WTC11 (cell line): ENCODE measurements at regions of chr21 and their contacts with region 1.

Region 1: GRCh38 chr21:44510508-44511210 is 29.3 kb downstream of the KRTAP10-1 start:
- DNase-seq: peak; percentile 82
- ATAC-seq: peak; percentile 86
- H3K4me3 Mint-ChIP-seq: no peak overlapping the region
- H3K27ac Mint-ChIP-seq: no peak overlapping the region
- H3K4me1 Mint-ChIP-seq: no peaks in the 10 kb centered on the region; the same call in 1 of the 2 replicates
- H3K27me3 Mint-ChIP-seq: no peaks in the 10 kb centered on the region
- CTCF ChIP-seq: peak; percentile 90

Region 2: GRCh38 chr21:44089001-44089911 is 421.4 kb before region 1 on chr21:
- CTCF ChIA-PET with region 1: no interaction called
- POLR2A ChIA-PET with region 1: no interaction called
- DNase-seq: no peak
- ATAC-seq: no peak
- H3K4me3 Mint-ChIP-seq: no peak overlapping the region
- H3K27ac Mint-ChIP-seq: no peak overlapping the region
- H3K4me1 Mint-ChIP-seq: no peaks in the 10 kb centered on the region
- H3K27me3 Mint-ChIP-seq: no peaks in the 10 kb centered on the region
- CTCF ChIP-seq: no peak

Region 3: GRCh38 chr21:44522456-44523204 is 12.0 kb after region 1 on chr21:
- CTCF ChIA-PET with region 1: interaction called, 21 read pairs
- POLR2A ChIA-PET with region 1: no interaction called
- DNase-seq: peak; percentile 18
- ATAC-seq: peak; percentile 24; the same call in 1 of the 2 replicates
- H3K4me3 Mint-ChIP-seq: no peak overlapping the region
- H3K27ac Mint-ChIP-seq: no peak overlapping the region
- H3K4me1 Mint-ChIP-seq: 0 out of 2 replicates have a peak, but pooled peaks cover 2% of the 10 kb centered on the region
- H3K27me3 Mint-ChIP-seq: no peaks in the 10 kb centered on the region; the same call in 1 of the 2 replicates
- CTCF ChIP-seq: no peak

Region 4: GRCh38 chr21:44697811-44698734 is 187.4 kb after region 1 on chr21:
- CTCF ChIA-PET with region 1: interaction called, 10 read pairs
- POLR2A ChIA-PET with region 1: no interaction called
- DNase-seq: no peak
- ATAC-seq: peak; percentile 66
- H3K4me3 Mint-ChIP-seq: no peak overlapping the region
- H3K27ac Mint-ChIP-seq: peak overlapping the region; percentile 27; the same call in 1 of the 2 replicates
- H3K4me1 Mint-ChIP-seq: peaks cover 76% of the 10 kb centered on the region
- H3K27me3 Mint-ChIP-seq: peaks cover 4% of the 10 kb centered on the region
- CTCF ChIP-seq: no peak

Region 5: GRCh38 chr21:44718571-44718970 is 207.9 kb after region 1 on chr21:
- CTCF ChIA-PET with region 1: interaction called, 20 read pairs
- POLR2A ChIA-PET with region 1: no interaction called
- DNase-seq: peak; percentile 61
- ATAC-seq: peak; percentile 93
- H3K4me3 Mint-ChIP-seq: no peak overlapping the region
- H3K27ac Mint-ChIP-seq: peak overlapping the region; percentile 13
- H3K4me1 Mint-ChIP-seq: peaks cover 46% of the 10 kb centered on the region
- H3K27me3 Mint-ChIP-seq: peaks cover 30% of the 10 kb centered on the region
- CTCF ChIP-seq: no peak

Region 6: DNA sequence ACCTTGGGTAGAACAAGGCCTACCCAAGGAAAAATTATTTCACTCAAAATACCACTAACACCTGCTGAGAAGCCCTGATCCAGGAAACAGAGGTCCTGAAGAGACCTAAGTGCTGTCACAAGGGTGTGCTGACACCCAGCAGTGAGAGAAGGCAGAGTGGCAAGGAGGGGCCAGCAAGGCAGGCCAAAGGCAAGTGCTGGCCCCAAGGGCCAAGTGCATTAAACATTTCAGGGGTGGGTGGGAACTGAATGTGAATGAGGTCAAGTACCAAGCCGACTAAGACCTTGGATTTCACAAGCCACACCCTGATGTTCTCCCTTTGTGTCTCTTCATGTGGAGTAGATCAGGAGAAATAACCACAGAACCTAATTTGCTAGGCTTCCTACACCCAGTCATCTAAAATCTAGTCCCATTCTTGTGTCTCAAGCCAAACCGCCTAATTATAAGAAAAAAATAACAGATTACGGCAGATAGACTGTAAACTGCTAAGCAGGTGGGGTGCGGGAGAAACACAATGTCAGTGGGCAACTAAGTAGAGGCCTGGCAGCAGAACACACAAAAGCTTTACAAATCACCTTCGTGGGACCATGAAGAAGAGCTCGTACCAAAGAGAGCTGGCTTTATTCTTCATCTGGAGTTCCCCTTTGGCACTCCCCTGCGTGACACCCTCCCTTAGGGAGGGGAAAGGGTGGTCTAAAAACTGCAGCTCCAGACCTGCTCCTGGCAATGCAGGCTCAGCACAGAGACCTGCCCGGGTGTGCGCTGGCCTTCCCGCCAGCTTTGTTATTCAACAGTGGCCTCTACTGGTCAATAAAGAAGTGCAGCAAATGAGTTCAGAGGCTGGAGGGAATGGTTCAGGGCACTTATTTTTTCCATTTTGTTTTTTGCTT is 282.3 kb after region 1 on chr21:
- CTCF ChIA-PET with region 1: interaction called, 53 read pairs
- POLR2A ChIA-PET with region 1: no interaction called
- DNase-seq: peak; percentile 52
- ATAC-seq: peak; percentile 96
- H3K4me3 Mint-ChIP-seq: no peak overlapping the region
- H3K27ac Mint-ChIP-seq: peak overlapping the region; percentile 80
- H3K4me1 Mint-ChIP-seq: peaks cover 24% of the 10 kb centered on the region
- H3K27me3 Mint-ChIP-seq: no peaks in the 10 kb centered on the region
- CTCF ChIP-seq: peak; percentile 54